ENCODE measurements at regions of chr15 and their contacts with region 1.

Region 1: DNA sequence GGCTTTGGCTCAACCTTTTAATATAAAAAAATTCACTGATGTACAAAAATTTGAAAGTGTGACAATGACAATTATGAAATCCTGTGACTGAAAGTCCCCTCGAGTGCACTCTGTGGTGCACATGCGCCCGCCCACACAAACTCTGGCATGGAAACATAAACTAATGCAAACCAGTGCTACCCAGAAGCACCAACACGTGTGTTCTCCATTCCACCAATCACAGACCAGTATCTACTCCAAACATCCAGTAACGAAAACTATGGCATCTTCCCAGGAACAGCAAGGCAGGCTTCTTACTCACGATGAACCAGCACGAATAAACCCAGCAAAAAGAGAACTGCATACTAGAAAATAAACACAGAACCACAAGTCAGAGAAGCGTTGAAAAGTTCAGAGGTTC is 11.7 kb upstream of the NMB start:
- DNase-seq: no peak
- H3K4me3 ChIP-seq: no peak overlapping the region
- H3K27ac ChIP-seq: no peak overlapping the region
- H3K4me1 ChIP-seq: no peaks in the 10 kb centered on the region
- H3K27me3 ChIP-seq: no peaks in the 10 kb centered on the region
- CTCF ChIP-seq: no peak
- EP300 ChIP-seq: no peak
- POLR2A ChIP-seq: no peak

Region 2: GRCh38 chr15:84716036-84716799 is 46.5 kb after region 1 on chr15 and contains the start of gene SEC11A:
- in situ Hi-C with region 1: no loop called
- intact Hi-C with region 1: loop called (anchors 10 kb)
- DNase-seq: peak; percentile 97
- H3K4me3 ChIP-seq: peak within 1 kb of the TSS; percentile 52 to 78 (median 65)
- H3K27ac ChIP-seq: peak within 1 kb of the TSS; percentile 92 to 95 (median 94)
- H3K4me1 ChIP-seq: peaks cover 9 to 28% (median 12%) of the 10 kb centered on the region in 4 donors
- H3K27me3 ChIP-seq: no peaks in the 10 kb centered on the region
- CTCF ChIP-seq: peak in 1 of 5 experiments; percentile 8
- EP300 ChIP-seq: no peak
- POLR2A ChIP-seq: peak; percentile 98
- total RNA-seq, gene SEC11A: 19.9 to 124 (median 83.0) TPM

Measured in transverse colon (tissue), 4 donors.